ENCODE measurements at regions of chr6 and their contacts with region 1.

Region 1: DNA sequence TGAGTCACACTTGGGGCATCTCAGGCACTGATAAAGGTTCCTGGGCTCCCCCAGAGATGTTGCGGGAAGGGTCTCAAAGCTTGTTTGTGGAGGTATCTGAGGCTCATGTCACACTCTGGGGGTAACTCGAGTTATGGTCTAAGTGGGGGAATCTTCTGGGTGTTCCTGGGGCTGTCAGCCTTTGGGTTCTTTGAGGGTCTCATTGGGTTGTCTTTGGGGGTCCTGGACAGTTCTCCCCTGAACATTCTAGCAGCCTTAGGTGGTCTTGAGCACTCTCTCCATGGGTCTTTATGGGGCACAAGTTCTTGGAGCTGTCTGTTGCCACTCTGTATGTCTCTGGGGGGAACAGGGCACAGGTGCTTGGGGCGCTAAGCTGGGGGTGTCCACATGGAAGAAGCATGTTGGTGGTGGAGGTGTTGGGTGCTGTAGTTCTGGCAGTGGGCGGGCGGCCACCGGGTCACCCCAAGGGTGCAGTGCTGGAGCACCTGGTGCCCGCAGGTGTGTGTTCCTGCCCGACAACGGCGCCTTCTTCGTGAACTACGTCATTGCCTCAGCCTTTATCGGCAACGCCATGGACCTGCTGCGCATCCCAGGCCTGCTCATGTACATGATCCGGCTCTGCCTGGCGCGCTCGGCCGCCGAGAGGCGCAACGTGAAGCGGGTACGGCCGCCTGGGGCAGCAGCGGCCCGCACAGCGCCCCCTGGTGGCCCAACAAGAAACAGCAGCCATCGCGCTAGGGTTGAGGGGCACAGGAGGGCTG is 7.1 kb upstream of the CAPN11 start:
- DNase-seq: peak; percentile 68 to 89 (median 83)
- H3K4me3 ChIP-seq: no peak overlapping the region
- H3K27ac ChIP-seq: no peak overlapping the region
- H3K4me1 ChIP-seq: no peaks in the 10 kb centered on the region
- H3K27me3 ChIP-seq: no peaks in the 10 kb centered on the region
- CTCF ChIP-seq: peak; percentile 99

Region 2: GRCh38 chr6:43702534-43703440 is 448.7 kb before region 1 on chr6:
- intact Hi-C with region 1: no loop called
- DNase-seq: peak; percentile 93 to 97 (median 96)
- H3K4me3 ChIP-seq: no peak overlapping the region
- H3K27ac ChIP-seq: peak overlapping the region; percentile 79 to 80
- H3K4me1 ChIP-seq: peaks cover 8 to 21% (median 19%) of the 10 kb centered on the region in 3 donors
- H3K27me3 ChIP-seq: no peaks in the 10 kb centered on the region
- CTCF ChIP-seq: no peak

Region 3: DNA sequence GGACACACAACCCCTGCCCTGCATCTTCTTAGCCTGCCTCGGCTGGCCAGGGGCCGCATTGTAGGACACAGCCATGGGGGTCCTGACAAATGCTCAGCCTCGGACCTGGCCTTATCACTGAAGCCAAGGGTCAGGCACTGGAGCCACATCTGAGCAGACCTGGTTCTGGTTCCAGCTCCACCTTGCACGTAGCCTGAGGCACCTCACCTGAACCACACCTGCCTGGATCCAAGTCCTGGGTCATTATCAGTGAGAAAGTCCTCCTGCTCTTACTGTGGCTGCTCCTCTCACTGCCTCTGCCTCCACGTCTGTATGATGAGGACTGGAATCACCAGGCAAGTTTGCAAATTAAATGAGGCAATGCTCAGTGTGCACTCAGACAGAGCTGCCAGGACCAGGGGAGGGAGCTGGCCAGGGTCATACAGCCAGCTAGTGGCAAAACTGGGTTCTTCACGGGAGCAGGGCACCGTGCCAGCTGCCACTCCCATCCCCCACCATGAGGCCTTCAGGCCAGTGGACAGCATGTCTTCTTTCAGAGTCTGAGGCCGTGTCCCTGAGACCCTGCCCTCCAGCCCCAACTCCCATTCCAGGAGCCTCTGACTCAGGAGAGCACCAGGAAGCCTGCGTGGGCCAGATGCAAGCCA is 64.5 kb before region 1 on chr6:
- intact Hi-C with region 1: no loop called
- DNase-seq: peak in 3 of 5 donors; percentile 50 to 88 (median 55)
- H3K4me3 ChIP-seq: no peak overlapping the region
- H3K27ac ChIP-seq: no peak overlapping the region
- H3K4me1 ChIP-seq: peaks cover 0 to 11% (median 8%) of the 10 kb centered on the region in 3 donors
- H3K27me3 ChIP-seq: no peaks in the 10 kb centered on the region
- CTCF ChIP-seq: no peak

Region 4: DNA sequence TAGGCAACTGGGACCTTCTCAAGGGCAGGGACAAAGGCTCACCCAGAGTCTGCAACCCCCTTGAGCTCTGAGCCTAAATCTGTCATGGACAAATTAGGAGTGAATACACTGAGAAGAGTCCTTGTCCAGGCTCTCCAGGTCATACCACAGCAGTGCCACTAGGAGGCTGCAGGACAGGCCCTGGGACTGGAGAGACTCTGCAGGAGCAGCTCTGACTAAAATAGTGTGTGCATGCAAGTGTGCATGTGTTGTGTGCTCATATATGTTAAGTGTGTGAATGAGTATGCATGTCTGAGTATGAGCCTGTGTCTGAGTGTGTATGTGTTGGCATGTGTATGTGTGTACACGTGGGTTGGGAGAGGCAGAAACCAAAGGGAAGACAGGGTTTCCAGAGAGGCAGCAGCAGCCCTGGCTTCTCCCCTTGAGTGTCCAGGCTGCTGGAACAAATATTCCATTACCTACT is 51.4 kb before region 1 on chr6:
- intact Hi-C with region 1: loop called (anchors 5 kb)
- DNase-seq: peak in 1 of 5 donors; percentile 39
- H3K4me3 ChIP-seq: no peak overlapping the region
- H3K27ac ChIP-seq: no peak overlapping the region
- H3K4me1 ChIP-seq: peaks cover 0 to 4% (median 0%) of the 10 kb centered on the region in 3 donors
- H3K27me3 ChIP-seq: no peaks in the 10 kb centered on the region
- CTCF ChIP-seq: peak; percentile 50

Region 5: DNA sequence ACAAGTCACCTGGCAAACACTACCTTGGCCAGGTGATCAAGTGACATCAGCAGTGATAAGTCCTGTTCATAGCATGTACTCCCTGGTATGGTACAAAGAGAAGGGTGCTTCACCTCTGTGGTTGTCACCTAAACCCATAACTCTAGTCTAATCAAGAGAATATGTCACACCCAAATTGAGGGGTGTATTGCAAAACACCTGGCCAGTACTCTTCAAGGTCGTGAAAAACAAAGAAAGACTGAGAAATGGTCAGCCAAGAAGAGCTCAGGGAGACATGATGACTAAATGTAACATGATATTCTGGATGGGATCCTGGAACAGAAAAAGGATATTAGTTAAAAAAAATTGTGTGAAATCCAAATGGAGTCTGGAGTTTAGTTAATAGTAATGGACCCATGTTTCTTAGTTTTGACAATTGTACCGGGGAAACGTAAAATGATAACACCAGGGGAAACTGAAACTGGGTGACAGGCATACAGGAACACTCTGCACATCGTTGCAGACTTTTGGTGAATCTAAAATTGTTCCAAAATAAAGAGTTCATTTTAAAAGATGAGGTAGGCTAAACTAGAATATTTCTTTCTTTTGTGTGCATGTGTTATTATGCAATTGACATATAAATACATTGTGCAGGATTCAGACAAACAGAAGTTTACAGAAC is 498.0 kb after region 1 on chr6:
- intact Hi-C with region 1: no loop called
- DNase-seq: no peak
- H3K4me3 ChIP-seq: no peak overlapping the region
- H3K27ac ChIP-seq: no peak overlapping the region
- H3K4me1 ChIP-seq: peaks cover 0 to 3% (median 0%) of the 10 kb centered on the region in 3 donors
- H3K27me3 ChIP-seq: no peaks in the 10 kb centered on the region
- CTCF ChIP-seq: no peak

Measured in kidney (tissue), 22 donors.